Pancreas (tissue), 10 donors: ENCODE measurements at regions of chr9 and their contacts with region 1.

Region 1: DNA sequence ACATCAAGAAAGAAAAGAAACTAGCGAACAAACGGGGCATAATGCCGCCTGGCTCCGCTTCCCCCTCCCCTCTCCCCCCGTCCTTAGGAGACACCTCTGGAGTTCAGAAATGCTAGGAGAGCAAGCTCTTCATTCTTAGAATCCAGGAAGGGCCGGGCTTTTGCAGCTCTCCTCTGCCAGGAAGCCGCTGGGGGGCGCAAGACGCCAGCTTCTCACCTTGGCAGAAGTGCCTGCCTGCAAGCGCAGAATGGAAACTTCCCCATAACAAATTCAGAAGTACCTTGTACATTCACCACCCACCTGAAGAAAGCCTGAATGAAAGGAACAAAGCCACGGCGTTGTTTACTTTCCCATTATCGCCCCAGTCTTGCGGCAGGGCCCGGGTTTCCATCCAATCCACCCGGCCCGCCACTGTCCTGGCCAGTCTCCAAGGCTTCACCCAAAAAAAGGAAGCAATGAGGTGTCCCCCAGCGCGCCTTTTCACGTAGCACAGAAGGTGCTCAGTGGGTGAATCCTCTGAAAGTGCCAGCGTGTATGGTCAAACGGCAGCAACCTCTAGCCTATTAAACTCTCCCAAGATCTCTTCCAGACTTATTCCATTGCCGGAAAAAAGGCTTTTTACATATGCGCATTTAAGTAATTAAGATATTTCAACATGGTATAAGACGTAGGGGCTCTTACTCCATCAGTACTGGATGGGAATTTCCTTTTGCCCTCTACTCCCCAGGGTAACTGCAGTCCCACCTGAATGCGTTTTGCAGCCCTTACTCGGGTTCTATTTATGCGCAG is 1.6 kb upstream of the GADD45G start:
- DNase-seq: peak; percentile 88 to 97 (median 93)
- ATAC-seq: peak; percentile 33 to 68 (median 56)
- H3K4me3 ChIP-seq: peak overlapping the region; percentile 18 to 97 (median 54)
- H3K27ac ChIP-seq: peak overlapping the region in 3 of 4 donors; percentile 44 to 73 (median 68)
- H3K4me1 ChIP-seq: peaks cover 5 to 16% (median 15%) of the 10 kb centered on the region in 3 donors
- H3K27me3 ChIP-seq: no peaks in the 10 kb centered on the region
- CTCF ChIP-seq: peak; percentile 68 to 76 (median 72)

Region 2: GRCh38 chr9:89923961-89924504 is 320.9 kb after region 1 on chr9:
- intact Hi-C with region 1: loop called in 2 of 3 experiments (anchors 5 to 10 kb)
- DNase-seq: peak in 2 of 6 donors; percentile 27 to 28
- ATAC-seq: peak; percentile 37 to 66 (median 52)
- H3K4me3 ChIP-seq: no peak overlapping the region
- H3K27ac ChIP-seq: no peak overlapping the region
- H3K4me1 ChIP-seq: peaks cover 0 to 16% (median 11%) of the 10 kb centered on the region in 3 donors
- H3K27me3 ChIP-seq: no peaks in the 10 kb centered on the region
- CTCF ChIP-seq: peak in 1 of 4 donors; percentile 9

Region 3: DNA sequence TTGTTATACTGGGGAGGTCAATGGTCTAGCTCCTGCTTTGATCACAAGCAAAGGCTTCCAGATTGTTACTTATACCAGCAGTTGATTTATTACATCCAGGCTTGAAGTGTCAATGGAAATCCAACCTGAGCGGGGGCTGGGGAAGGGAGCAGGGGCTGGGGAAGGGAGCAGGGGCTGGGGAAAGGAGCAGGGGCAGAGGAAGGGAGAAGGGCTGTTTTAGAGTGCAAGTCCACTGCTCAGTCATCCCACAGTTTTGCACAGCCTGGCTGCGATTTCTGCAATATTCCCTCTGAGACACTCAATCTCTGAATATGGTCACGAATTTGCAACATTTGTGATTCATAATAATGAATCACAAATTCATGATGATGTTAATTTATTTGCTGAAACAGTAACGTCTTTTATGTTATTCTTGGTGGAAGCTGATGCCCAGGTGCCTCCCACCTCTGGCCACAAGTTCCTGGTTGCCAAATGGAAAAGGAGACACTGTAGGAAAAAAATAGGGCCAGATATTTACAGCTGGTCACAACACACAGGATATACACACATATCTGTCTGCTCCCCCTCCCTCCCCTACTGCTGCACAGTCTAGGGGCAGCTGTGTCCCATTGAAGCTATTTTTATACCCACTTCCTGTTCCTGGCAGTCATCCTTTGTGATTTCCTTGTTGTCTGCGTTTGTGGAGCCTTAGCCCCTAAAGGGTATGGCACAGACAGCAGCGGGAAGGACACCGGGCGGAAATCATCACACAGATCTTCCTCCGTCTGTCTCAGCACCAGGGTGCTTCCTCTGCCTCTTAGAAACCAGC is 326.7 kb after region 1 on chr9:
- intact Hi-C with region 1: loop called in 1 of 3 experiments (anchors 10 kb)
- DNase-seq: no peak
- ATAC-seq: peak in 3 of 4 donors; percentile 45 to 52 (median 51)
- H3K4me3 ChIP-seq: no peak overlapping the region
- H3K27ac ChIP-seq: no peak overlapping the region
- H3K4me1 ChIP-seq: peaks cover 0 to 12% (median 11%) of the 10 kb centered on the region in 3 donors
- H3K27me3 ChIP-seq: no peaks in the 10 kb centered on the region
- CTCF ChIP-seq: no peak

Region 4: GRCh38 chr9:90095682-90096081 is 492.5 kb after region 1 on chr9:
- intact Hi-C with region 1: loop called in 2 of 3 experiments (anchors 2 to 5 kb)
- DNase-seq: peak; percentile 75 to 86 (median 79)
- ATAC-seq: peak; percentile 89 to 90 (median 90)
- H3K4me3 ChIP-seq: no peak overlapping the region
- H3K27ac ChIP-seq: peak overlapping the region in 1 of 4 donors; percentile 40
- H3K4me1 ChIP-seq: peaks cover 0 to 5% (median 4%) of the 10 kb centered on the region in 3 donors
- H3K27me3 ChIP-seq: no peaks in the 10 kb centered on the region
- CTCF ChIP-seq: no peak